IMR-90 (cell line): ENCODE measurements at regions of chr2 and their contacts with region 1.

Region 1: GRCh38 chr2:220209751-220210150 is 582.3 kb downstream of the SLC4A3 start:
- DNase-seq: no peak
- ATAC-seq: no peak
- H3K4me3 ChIP-seq: no peak overlapping the region
- H3K27ac ChIP-seq: no peak overlapping the region
- H3K4me1 ChIP-seq: no peaks in the 10 kb centered on the region
- H3K27me3 ChIP-seq: no peaks in the 10 kb centered on the region
- CTCF ChIP-seq: no peak
- POLR2A ChIP-seq: no peak
- RAD21 ChIP-seq: no peak

Region 2: GRCh38 chr2:220165401-220165800 is 44.4 kb before region 1 on chr2:
- CTCF ChIA-PET with region 1: no interaction called
- POLR2A ChIA-PET with region 1: no interaction called
- dilution Hi-C with region 1: no loop called
- in situ Hi-C with region 1: no loop called
- intact Hi-C with region 1: loop called (anchors 1 kb)
- DNase-seq: no peak
- ATAC-seq: no peak
- H3K4me3 ChIP-seq: no peak overlapping the region
- H3K27ac ChIP-seq: no peak overlapping the region
- H3K4me1 ChIP-seq: no peaks in the 10 kb centered on the region
- H3K27me3 ChIP-seq: no peaks in the 10 kb centered on the region
- CTCF ChIP-seq: no peak
- POLR2A ChIP-seq: no peak
- RAD21 ChIP-seq: no peak